GM13977 (cell line): ENCODE measurements at regions of chr14 and their contacts with region 1.

Region 1: GRCh38 chr14:70027785-70028428 is 148.7 kb downstream of the SMOC1 start:
- DNase-seq: peak; percentile 84
- CTCF ChIP-seq: peak; percentile 97

Region 2: DNA sequence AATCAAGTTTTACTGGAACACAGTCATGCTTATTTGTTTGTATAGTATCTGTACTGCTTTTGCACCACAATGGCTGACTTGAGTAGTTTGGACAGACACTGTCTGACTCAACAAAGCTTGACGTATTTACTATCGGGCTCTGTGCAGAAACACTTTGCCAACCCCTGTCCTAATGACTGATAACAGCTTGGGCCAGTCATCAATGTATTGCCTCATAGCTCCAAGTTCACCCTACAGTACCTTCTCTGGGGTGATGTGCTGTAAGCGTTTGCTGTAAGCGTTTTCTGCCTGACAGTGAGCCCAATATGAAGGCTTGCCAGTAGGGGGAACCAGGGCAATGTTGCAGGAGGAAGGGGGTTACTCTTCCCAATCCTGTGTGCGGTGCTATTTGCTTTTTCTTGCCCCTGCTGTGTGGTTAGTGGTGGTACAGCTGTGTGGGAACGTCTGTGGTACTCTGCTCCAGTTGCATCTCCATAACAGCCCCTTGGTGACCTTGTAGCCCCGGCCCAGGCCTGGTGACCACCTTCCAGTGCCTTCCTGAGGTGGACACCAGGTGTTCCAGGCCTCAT is 447.8 kb before region 1 on chr14:
- in situ Hi-C with region 1: loop called (anchors 25 kb)
- DNase-seq: no peak
- CTCF ChIP-seq: peak; percentile 38

Region 3: GRCh38 chr14:69818757-69819191 is 209.1 kb before region 1 on chr14:
- in situ Hi-C with region 1: loop called (anchors 10 kb)
- DNase-seq: peak; percentile 74
- CTCF ChIP-seq: peak; percentile 80